ENCODE measurements at regions of chr1 and their contacts with region 1.

Region 1: DNA sequence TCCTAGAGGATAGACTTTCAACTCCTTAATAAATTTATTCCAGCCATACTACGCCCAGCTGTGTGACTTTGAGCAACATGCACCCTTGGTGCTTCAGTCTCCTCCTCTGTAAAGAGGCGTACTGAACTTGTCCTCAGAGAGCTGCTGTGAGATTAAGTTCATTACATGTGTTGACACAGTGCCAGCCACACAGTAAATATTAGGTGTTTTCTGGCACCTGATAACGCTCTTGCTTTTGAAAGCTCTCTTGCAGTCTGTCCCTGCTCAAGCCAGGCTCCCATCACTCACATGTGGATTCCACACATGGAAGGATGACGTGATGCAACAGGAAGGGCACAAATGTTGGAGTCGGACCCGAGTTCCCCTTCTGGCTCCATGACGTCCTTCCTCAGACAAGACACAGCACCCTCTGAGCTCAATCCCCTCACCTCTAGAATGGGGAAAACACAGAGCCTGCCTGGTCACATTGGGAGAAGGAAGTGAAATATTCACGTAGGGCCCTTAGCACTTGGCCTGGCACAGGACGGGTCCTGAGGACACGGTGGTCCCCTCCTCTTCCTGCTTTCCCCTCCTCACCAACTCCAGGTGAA is 7.7 kb downstream of the IFNLR1 start:
- DNase-seq: no peak
- ATAC-seq: no peak
- H3K4me3 ChIP-seq: no peak overlapping the region
- H3K27ac ChIP-seq: no peak overlapping the region
- H3K4me1 ChIP-seq: peaks cover 6% of the 10 kb centered on the region
- H3K27me3 ChIP-seq: peaks cover 0 to 4% of the 10 kb centered on the region in 2 experiments; a peak in 2 of 4 replicates
- CTCF ChIP-seq: no peak
- EP300 ChIP-seq: no peak
- POLR2A ChIP-seq: no peak
- RAD21 ChIP-seq: no peak

Region 2: DNA sequence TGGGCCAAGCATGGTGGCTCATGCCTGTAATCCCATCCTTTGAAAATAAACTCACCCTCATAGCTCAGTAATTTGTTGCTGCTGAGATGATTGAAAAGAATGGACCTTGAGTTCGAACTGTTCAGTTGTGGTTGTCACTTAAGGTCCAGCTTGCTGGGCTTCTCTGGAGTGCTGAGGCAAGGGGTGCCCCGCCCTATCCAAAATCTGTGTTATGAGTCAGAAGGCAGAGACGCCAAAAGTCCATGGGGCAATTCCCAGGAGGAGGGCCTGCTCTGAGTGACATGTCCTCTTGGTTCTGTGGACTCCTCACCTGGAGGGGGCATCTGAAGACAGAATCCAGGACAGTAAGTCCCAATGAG is 132.3 kb before region 1 on chr1:
- CTCF ChIA-PET with region 1: no interaction called
- POLR2A ChIA-PET with region 1: no interaction called
- RAD21 ChIA-PET with region 1: no interaction called
- SMC1A ChIA-PET with region 1: no interaction called
- in situ Hi-C with region 1: no loop called
- intact Hi-C with region 1: no loop called
- DNase-seq: no peak
- ATAC-seq: no peak; the same call in 1 of the 3 replicates
- H3K4me3 ChIP-seq: no peak overlapping the region
- H3K27ac ChIP-seq: no peak overlapping the region
- H3K4me1 ChIP-seq: no peaks in the 10 kb centered on the region
- H3K27me3 ChIP-seq: no peaks in the 10 kb centered on the region
- CTCF ChIP-seq: no peak
- EP300 ChIP-seq: no peak
- POLR2A ChIP-seq: no peak
- RAD21 ChIP-seq: no peak

Region 3: DNA sequence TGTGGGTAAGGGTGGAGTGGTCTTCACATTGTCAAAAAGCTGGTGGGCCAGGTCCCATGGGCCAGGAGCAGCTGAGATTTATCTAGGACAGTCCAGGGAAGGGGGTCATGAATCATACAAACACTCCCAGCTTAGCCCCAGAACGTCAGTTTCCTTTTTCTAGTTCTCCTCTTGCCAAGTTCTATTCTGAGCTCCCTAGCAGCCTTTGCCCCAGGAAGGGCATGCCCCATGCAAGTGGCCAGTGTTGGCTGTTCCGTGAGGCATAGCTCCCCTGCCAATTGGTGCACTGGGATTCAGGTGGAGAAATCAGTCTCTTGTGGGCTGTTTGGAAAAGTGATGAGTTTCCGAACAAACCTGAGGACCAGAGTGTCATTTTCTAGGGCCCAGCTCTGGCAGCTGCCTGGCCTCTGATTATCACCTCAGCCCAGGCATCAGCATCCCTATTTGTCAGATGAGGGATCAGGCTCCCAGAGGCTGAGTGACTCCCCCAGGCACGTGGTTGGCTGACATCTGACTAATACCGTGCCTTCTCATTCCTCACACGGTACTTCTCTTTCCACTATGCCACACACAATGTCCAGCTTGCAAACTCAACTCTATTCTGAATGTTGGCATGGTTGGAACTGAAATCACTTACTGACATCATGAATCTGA is 53.2 kb before region 1 on chr1:
- CTCF ChIA-PET with region 1: no interaction called
- POLR2A ChIA-PET with region 1: no interaction called
- RAD21 ChIA-PET with region 1: no interaction called
- SMC1A ChIA-PET with region 1: no interaction called
- in situ Hi-C with region 1: loop called (anchors 5 kb)
- intact Hi-C with region 1: no loop called
- DNase-seq: no peak
- ATAC-seq: no peak
- H3K4me3 ChIP-seq: no peak overlapping the region
- H3K27ac ChIP-seq: no peak overlapping the region
- H3K4me1 ChIP-seq: no peaks in the 10 kb centered on the region; the same call in 1 of the 2 replicates
- H3K27me3 ChIP-seq: no peaks in the 10 kb centered on the region; a peak in 2 of 4 replicates
- CTCF ChIP-seq: no peak
- EP300 ChIP-seq: no peak
- POLR2A ChIP-seq: no peak
- RAD21 ChIP-seq: no peak

Region 4: GRCh38 chr1:24438423-24438901 is 259.1 kb after region 1 on chr1:
- CTCF ChIA-PET with region 1: no interaction called
- POLR2A ChIA-PET with region 1: no interaction called
- RAD21 ChIA-PET with region 1: no interaction called
- SMC1A ChIA-PET with region 1: no interaction called
- in situ Hi-C with region 1: no loop called
- intact Hi-C with region 1: no loop called
- DNase-seq: no peak
- ATAC-seq: no peak
- H3K4me3 ChIP-seq: no peak overlapping the region
- H3K27ac ChIP-seq: no peak overlapping the region
- H3K4me1 ChIP-seq: no peaks in the 10 kb centered on the region
- H3K27me3 ChIP-seq: no peaks in the 10 kb centered on the region
- CTCF ChIP-seq: no peak
- EP300 ChIP-seq: no peak
- POLR2A ChIP-seq: no peak
- RAD21 ChIP-seq: no peak

Measured in GM12878 (cell line).